ENCODE measurements at regions of chr14 and their contacts with region 1.

Region 1: GRCh38 chr14:69090187-69090789 is 62.6 kb downstream of the DCAF5 start:
- DNase-seq: peak; percentile 45
- ATAC-seq: peak; percentile 98
- H3K4me3 ChIP-seq: no peak overlapping the region
- H3K27ac ChIP-seq: no peak overlapping the region
- H3K4me1 ChIP-seq: no peaks in the 10 kb centered on the region
- H3K27me3 ChIP-seq: no peaks in the 10 kb centered on the region
- CTCF ChIP-seq: peak; percentile 77 to 89 (median 86); a peak in 5 of 6 replicates
- POLR2A ChIP-seq: no peak
- RAD21 ChIP-seq: peak; percentile 77

Region 2: DNA sequence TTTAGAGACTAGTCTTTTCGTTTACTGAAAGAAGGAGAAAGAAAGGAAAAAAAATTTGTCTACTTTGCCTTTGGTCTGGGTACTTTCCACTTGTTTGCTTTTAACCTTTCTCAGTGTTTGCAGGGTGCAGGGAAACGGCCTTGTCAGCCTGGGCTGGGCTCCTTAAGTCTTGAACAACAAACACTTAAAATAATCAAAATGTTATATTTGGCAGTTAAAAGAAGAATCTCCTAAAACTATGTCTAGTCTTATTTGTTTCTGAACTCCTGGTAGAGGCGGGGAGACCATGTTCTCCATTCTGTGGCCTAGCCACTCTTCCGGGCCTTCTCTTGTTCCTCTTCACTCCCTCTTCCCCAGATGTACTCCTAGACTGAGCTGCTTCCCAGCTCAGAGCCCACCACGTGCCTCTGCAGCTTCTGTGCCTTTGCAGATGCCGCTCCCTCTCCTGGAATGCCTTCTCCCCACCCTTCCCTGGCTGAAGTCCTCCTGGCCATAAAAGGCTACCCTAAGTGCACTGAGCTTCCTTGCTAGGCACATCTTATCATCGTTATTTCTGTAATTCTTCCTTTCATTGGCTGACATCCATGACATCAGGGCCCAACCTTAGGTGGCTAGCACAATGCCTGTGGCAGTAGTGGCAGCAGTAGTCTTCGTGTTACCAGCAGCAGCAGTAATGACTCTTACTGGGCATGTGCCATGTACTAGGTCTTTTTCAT is 730.3 kb before region 1 on chr14:
- CTCF ChIA-PET with region 1: no interaction called
- POLR2A ChIA-PET with region 1: no interaction called
- RAD21 ChIA-PET with region 1: no interaction called
- intact Hi-C with region 1: no loop called
- DNase-seq: peak; percentile 37
- ATAC-seq: peak; percentile 55
- H3K4me3 ChIP-seq: no peak overlapping the region
- H3K27ac ChIP-seq: peak overlapping the region; percentile 50
- H3K4me1 ChIP-seq: peaks cover 52% of the 10 kb centered on the region in 2 experiments
- H3K27me3 ChIP-seq: no peaks in the 10 kb centered on the region
- CTCF ChIP-seq: no peak
- POLR2A ChIP-seq: peak; percentile 23
- RAD21 ChIP-seq: no peak

Region 3: DNA sequence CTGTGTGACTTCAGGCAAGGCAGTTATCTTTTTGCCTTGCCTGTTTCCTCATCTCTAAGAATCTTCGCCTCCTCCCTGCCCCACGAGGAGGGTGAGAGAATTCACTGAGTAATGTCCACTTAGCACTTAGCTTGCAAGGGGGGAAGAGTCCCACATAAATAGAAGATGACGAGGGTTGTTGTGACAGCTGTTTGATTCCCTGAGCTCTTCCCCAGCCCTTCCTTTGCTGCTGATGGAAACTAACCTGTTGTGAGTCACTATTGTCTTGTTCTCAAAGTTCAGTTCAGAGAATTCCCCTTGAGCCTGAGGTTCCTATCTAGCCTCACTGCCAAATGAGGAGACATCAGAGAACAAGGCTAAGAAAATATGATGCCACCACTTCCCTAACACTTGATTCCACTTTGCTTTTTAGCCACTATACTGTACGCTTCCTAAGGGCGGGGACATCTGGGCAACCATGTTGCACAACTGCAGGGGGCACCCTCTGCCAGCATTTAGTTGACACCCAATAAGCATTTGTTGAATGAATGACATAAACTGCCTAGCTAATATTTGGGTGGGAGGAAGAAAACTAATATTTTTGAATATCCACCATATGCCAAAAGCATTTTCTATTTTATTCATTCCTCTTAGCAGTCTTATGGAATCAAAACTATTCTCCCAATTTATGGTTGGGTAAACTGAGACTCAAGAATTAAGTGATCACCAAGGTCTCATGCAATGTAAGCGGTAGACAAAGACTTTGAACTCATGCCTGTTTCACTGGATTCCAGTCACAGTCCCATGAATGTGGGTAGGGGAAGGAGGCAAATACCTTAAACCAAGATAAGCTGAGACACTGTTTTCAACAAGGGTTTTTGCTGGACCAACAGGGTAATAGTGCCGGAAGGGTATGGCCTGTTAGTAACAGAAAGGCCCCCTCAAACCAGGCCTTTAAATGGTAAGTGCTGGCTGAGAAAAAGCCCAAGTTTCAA is 375.0 kb before region 1 on chr14:
- CTCF ChIA-PET with region 1: no interaction called
- POLR2A ChIA-PET with region 1: no interaction called
- RAD21 ChIA-PET with region 1: no interaction called
- intact Hi-C with region 1: no loop called
- DNase-seq: no peak
- ATAC-seq: no peak
- H3K4me3 ChIP-seq: no peak overlapping the region
- H3K27ac ChIP-seq: no peak overlapping the region
- H3K4me1 ChIP-seq: peaks cover 0 to 5% of the 10 kb centered on the region in 2 experiments; a peak in 1 of 4 replicates
- H3K27me3 ChIP-seq: no peaks in the 10 kb centered on the region
- CTCF ChIP-seq: peak in 2 of 3 experiments; percentile 13 to 32; a peak in 3 of 6 replicates
- POLR2A ChIP-seq: no peak
- RAD21 ChIP-seq: no peak

Region 4: DNA sequence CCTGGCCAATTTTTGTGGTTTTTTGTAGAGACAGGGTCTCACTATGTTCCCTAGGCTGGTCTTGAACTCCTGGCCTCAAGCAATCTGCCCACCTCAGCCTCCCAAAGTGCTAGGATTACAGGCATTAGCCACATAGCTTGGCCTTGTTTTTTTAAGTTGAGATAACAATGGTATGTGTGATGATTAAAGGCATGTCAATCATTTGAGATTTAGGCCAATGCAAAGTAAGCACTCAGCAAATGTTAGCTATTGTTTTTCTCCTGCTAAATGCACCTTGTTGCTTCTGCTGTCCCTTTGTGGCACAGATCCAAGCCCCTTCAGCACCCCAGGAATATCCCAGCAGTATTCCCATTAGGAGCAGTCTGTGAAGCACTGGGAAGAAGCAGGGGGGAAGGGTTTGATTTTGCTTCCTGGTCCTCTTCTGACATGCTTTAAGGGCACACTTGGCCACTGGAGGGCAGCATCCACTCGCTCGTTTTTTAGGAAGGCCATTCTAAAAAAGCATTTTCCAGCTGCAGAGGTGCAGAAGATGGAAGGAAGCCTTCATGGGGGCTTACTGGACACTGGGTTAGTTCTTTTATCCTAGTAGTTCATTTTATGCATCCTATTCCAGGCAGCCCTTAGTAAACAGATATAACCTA is 227.2 kb before region 1 on chr14:
- CTCF ChIA-PET with region 1: interaction called, 3 read pairs
- POLR2A ChIA-PET with region 1: no interaction called
- RAD21 ChIA-PET with region 1: no interaction called
- intact Hi-C with region 1: loop called (anchors 5 kb)
- DNase-seq: peak; percentile 67
- ATAC-seq: peak; percentile 96
- H3K4me3 ChIP-seq: no peak overlapping the region
- H3K27ac ChIP-seq: no peak overlapping the region
- H3K4me1 ChIP-seq: peaks cover 0 to 4% of the 10 kb centered on the region in 2 experiments; a peak in 2 of 4 replicates
- H3K27me3 ChIP-seq: no peaks in the 10 kb centered on the region
- CTCF ChIP-seq: peak; percentile 78 to 86 (median 85)
- POLR2A ChIP-seq: no peak
- RAD21 ChIP-seq: peak; percentile 93

Region 5: GRCh38 chr14:68911594-68912227 is 178.6 kb before region 1 on chr14:
- CTCF ChIA-PET with region 1: interaction called, 15 read pairs
- POLR2A ChIA-PET with region 1: no interaction called
- RAD21 ChIA-PET with region 1: interaction called in 1 of 2 experiments, 3 read pairs
- intact Hi-C with region 1: loop called (anchors 1 kb)
- DNase-seq: peak; percentile 54
- ATAC-seq: peak; percentile 98
- H3K4me3 ChIP-seq: no peak overlapping the region
- H3K27ac ChIP-seq: no peak overlapping the region
- H3K4me1 ChIP-seq: no peaks in the 10 kb centered on the region
- H3K27me3 ChIP-seq: no peaks in the 10 kb centered on the region
- CTCF ChIP-seq: peak; percentile 98 to 99 (median 99)
- POLR2A ChIP-seq: no peak
- RAD21 ChIP-seq: peak; percentile 92